BJ (cell line): ENCODE measurements at regions of chr19 and their contacts with region 1.

Region 1: GRCh38 chr19:5554859-5555258 is 12.9 kb downstream of the TINCR start:
- DNase-seq: no peak
- H3K4me3 ChIP-seq: no peak overlapping the region
- H3K27me3 ChIP-seq: 0 out of 2 replicates have a peak, but pooled peaks cover 2% of the 10 kb centered on the region
- CTCF ChIP-seq: no peak

Region 2: GRCh38 chr19:5480427-5480836 is 74.4 kb before region 1 on chr19:
- CTCF ChIA-PET with region 1: no interaction called
- POLR2A ChIA-PET with region 1: no interaction called
- DNase-seq: no peak
- H3K4me3 ChIP-seq: no peak overlapping the region
- H3K27me3 ChIP-seq: peaks cover 20% of the 10 kb centered on the region
- CTCF ChIP-seq: peak; percentile 38; the same call in 1 of the 2 replicates

Region 3: GRCh38 chr19:5571777-5572176 is 16.9 kb after region 1 on chr19:
- CTCF ChIA-PET with region 1: no interaction called
- POLR2A ChIA-PET with region 1: no interaction called
- DNase-seq: no peak
- H3K4me3 ChIP-seq: no peak overlapping the region
- H3K27me3 ChIP-seq: peaks cover 9% of the 10 kb centered on the region
- CTCF ChIP-seq: no peak

Region 4: GRCh38 chr19:5605362-5605761 is 50.5 kb after region 1 on chr19:
- CTCF ChIA-PET with region 1: no interaction called
- POLR2A ChIA-PET with region 1: interaction called, 14 read pairs
- DNase-seq: no peak
- H3K4me3 ChIP-seq: no peak overlapping the region
- H3K27me3 ChIP-seq: no peaks in the 10 kb centered on the region
- CTCF ChIP-seq: no peak

Region 5: GRCh38 chr19:5686647-5687359 is 131.9 kb after region 1 on chr19:
- CTCF ChIA-PET with region 1: no interaction called
- POLR2A ChIA-PET with region 1: no interaction called
- DNase-seq: peak; percentile 47
- H3K4me3 ChIP-seq: peak overlapping the region; percentile 56
- H3K27me3 ChIP-seq: no peaks in the 10 kb centered on the region
- CTCF ChIP-seq: peak; percentile 98